K562 (cell line): ENCODE measurements at regions of chr15 and their contacts with region 1.

Region 1: DNA sequence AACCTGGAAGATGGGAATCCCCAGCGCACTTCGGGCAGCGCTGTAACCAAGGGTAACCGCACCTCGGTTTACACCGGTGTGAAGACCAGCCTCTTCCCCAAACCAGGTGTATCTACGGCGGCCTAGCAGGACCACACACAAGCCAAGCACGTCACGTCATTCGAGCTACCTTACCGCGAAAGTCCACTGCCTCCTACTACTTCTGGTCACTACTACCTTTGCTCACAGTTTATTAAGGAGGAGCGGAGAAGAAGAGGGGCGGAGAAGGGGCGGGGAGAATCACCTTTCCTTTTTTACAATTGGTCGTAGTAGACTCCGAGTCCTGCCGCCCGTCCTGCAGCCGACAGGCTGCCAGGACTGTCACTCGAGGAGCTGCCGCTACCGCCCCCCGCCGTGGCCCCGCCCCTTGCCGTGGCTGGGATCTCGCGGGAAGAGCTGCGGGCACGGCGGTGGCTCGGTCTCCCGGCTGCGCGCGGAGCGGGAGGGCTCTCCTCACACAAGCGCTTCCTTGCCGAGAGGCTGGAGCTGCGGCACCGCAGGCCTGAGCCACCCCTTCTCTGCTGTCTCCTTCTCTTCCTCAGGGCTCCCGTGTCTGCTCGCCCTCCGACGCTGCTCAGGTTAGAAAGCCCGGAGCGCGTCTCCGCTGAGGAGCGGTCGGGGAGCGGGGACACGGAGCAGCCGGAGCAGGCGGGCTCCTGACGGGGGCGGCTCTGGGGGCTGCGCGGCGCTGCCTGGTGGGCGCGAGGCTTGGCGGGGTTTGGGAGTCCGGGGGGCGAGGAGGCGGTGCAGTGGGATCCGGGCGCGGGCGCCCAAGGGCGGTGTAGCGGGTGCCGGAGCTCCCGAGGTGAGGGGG is at the start of gene GLCE:
- DNase-seq: peak; percentile 96 to 99 (median 98)
- ATAC-seq: peak; percentile 99
- H3K4me3 ChIP-seq: peak within 1 kb of the TSS; percentile 65
- H3K27ac ChIP-seq: peak within 1 kb of the TSS; percentile 37
- H3K4me1 ChIP-seq: peaks cover 23 to 41% of the 10 kb centered on the region in 2 experiments
- H3K27me3 ChIP-seq: no peaks in the 10 kb centered on the region; a peak in 1 of 5 replicates
- CTCF ChIP-seq: 0 out of 6 replicates have a peak, but pooled peaks of 1 of the 3 experiments have one; percentile 13
- EP300 ChIP-seq: no peak
- POLR2A ChIP-seq: peak; percentile 90
- RAD21 ChIP-seq: no peak; a peak in 1 of 4 replicates
- polyA plus RNA-seq, gene GLCE: 10.0 to 12.0 TPM

Region 2: DNA sequence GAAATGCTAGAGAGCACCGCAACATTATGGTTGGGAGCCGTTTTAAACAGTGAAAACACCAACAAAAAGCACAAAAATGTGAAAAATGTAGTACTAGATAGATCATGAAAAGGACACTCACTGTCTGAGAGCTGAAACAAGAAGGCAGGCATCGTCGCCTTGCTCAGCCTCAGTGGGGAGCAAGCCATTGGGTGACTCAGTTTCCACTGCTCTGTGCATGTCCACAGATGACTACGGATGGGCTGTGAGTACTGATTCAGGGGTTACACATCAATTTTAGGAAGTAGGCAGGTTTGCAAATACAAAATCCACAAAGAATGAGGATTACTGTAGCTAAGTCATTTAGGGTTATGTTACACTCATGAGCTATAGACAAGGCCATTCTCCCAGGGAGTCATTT is 135.0 kb before region 1 on chr15:
- CTCF ChIA-PET with region 1: no interaction called
- POLR2A ChIA-PET with region 1: no interaction called
- in situ Hi-C with region 1: no loop called
- intact Hi-C with region 1: no loop called
- DNase-seq: no peak
- ATAC-seq: no peak
- H3K4me3 ChIP-seq: no peak overlapping the region
- H3K27ac ChIP-seq: no peak overlapping the region
- H3K4me1 ChIP-seq: no peaks in the 10 kb centered on the region; a peak in 1 of 5 replicates
- H3K27me3 ChIP-seq: peaks cover 0 to 23% of the 10 kb centered on the region in 2 experiments; a peak in 3 of 5 replicates
- CTCF ChIP-seq: no peak
- EP300 ChIP-seq: no peak
- POLR2A ChIP-seq: no peak
- RAD21 ChIP-seq: no peak

Region 3: GRCh38 chr15:69462493-69463181 is 302.3 kb after region 1 on chr15:
- CTCF ChIA-PET with region 1: no interaction called
- POLR2A ChIA-PET with region 1: no interaction called
- in situ Hi-C with region 1: no loop called
- intact Hi-C with region 1: loop called (anchors 10 kb)
- DNase-seq: peak; percentile 96 to 98 (median 97)
- ATAC-seq: peak; percentile 96
- H3K4me3 ChIP-seq: peak overlapping the region; percentile 45
- H3K27ac ChIP-seq: peak overlapping the region; percentile 92
- H3K4me1 ChIP-seq: peaks cover 12 to 27% of the 10 kb centered on the region in 2 experiments; a peak in 4 of 5 replicates
- H3K27me3 ChIP-seq: no peaks in the 10 kb centered on the region
- CTCF ChIP-seq: peak; percentile 80 to 96 (median 95); a peak in 5 of 6 replicates
- EP300 ChIP-seq: peak; percentile 35; the same call in 1 of the 2 replicates
- POLR2A ChIP-seq: peak; percentile 93
- RAD21 ChIP-seq: no peak